Common myeloid progenitor, CD34-positive (primary cell): ENCODE measurements at regions of chr5 and their contacts with region 1.

Region 1: GRCh38 chr5:149434162-149435014 is 55.3 kb upstream of the IL17B start:
- DNase-seq: peak; percentile 52 to 73 (median 65)
- H3K4me3 ChIP-seq: no peak overlapping the region
- H3K27ac ChIP-seq: no peak overlapping the region
- H3K4me1 ChIP-seq: peaks cover 0 to 38% (median 24%) of the 10 kb centered on the region in 4 experiments
- H3K27me3 ChIP-seq: no peaks in the 10 kb centered on the region

Region 2: GRCh38 chr5:149317281-149318048 is 116.9 kb before region 1 on chr5:
- CTCF ChIA-PET with region 1: interaction called, 82 read pairs
- POLR2A ChIA-PET with region 1: no interaction called
- DNase-seq: peak; percentile 43 to 61 (median 54)
- H3K4me3 ChIP-seq: no peak overlapping the region
- H3K27ac ChIP-seq: no peak overlapping the region
- H3K4me1 ChIP-seq: peaks cover 0 to 11% (median 6%) of the 10 kb centered on the region in 4 experiments
- H3K27me3 ChIP-seq: no peaks in the 10 kb centered on the region

Region 3: GRCh38 chr5:149400304-149400703 is 34.1 kb before region 1 on chr5:
- CTCF ChIA-PET with region 1: interaction called, 11 read pairs
- POLR2A ChIA-PET with region 1: no interaction called
- DNase-seq: no peak
- H3K4me3 ChIP-seq: no peak overlapping the region
- H3K27ac ChIP-seq: no peak overlapping the region
- H3K4me1 ChIP-seq: no peaks in the 10 kb centered on the region
- H3K27me3 ChIP-seq: no peaks in the 10 kb centered on the region

Region 4: GRCh38 chr5:149422366-149423048 is 11.9 kb before region 1 on chr5:
- CTCF ChIA-PET with region 1: interaction called, 61 read pairs
- POLR2A ChIA-PET with region 1: no interaction called
- DNase-seq: peak in 2 of 3 donors; percentile 51 to 62
- H3K4me3 ChIP-seq: peak overlapping the region in 5 of 7 experiments; percentile 5 to 67 (median 49)
- H3K27ac ChIP-seq: no peak overlapping the region
- H3K4me1 ChIP-seq: peaks cover 3 to 48% (median 28%) of the 10 kb centered on the region in 4 experiments
- H3K27me3 ChIP-seq: no peaks in the 10 kb centered on the region

Region 5: DNA sequence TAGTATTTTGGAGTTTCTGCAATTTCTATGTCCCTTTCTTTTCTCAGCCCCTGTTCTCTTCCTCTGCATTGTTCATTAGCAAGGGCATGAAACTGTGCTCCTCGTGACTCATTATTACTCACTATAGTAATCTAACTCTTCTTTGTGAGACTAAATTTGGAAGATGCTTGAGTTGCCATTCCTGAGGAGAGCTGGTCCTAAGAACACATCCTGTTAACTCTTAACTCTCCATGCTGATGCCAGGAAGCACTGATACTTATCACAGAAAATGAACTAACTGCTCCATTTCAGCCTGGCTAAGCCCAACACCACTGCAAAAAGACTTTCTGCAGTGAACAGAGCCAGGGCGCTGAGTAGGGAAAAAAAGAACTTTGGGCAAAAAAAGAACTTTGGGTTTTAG is 127.5 kb after region 1 on chr5:
- CTCF ChIA-PET with region 1: interaction called, 17 read pairs
- POLR2A ChIA-PET with region 1: no interaction called
- DNase-seq: peak in 1 of 3 donors; percentile 18
- H3K4me3 ChIP-seq: no peak overlapping the region
- H3K27ac ChIP-seq: no peak overlapping the region
- H3K4me1 ChIP-seq: peaks cover 0 to 10% (median 0%) of the 10 kb centered on the region in 4 experiments
- H3K27me3 ChIP-seq: no peaks in the 10 kb centered on the region